ENCODE measurements at regions of chr10 and their contacts with region 1.

Region 1: DNA sequence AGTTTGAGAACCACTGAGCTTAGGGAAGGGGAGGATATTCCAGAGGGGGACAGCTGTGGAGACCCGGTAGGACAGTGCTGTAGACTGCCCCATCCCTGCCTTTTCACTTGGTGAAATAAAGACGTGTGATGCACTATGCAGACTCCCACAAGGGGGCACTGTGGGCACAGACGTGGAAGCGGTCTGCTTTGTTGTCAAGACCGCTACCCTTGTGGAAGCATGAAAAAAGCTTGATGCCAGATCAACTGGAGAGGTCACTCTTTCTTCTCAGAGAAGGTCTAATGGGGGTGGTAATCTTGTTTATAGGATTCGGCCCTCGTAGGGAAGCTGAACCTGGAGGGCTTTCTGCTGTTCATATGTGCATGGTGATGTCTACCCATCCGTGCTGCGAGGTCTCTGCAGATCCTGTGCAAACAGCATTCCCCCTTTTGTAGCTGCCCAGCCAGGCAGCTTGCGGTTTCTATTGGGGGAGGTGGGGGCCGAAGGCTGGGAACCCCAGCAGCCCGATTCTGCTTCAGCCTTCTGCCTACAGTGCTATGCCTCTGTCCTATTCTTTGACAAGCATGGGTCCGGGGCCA is 13.7 kb downstream of the RPS24 start:
- DNase-seq: peak; percentile 70 to 86
- ATAC-seq: peak; percentile 71 to 81
- H3K4me3 ChIP-seq: no peak overlapping the region
- H3K27ac ChIP-seq: peak overlapping the region in 1 of 2 experiments; percentile 57; a peak in 3 of 6 replicates
- H3K4me1 ChIP-seq: no peaks in the 10 kb centered on the region; the same call in 2 of the 3 replicates
- CTCF ChIP-seq: peak; percentile 95
- EP300 ChIP-seq: no peak
- POLR2A ChIP-seq: no peak
- RAD21 ChIP-seq: peak; percentile 96

Region 2: GRCh38 chr10:77983384-77984341 is 63.7 kb before region 1 on chr10:
- CTCF ChIA-PET with region 1: no interaction called
- POLR2A ChIA-PET with region 1: no interaction called
- DNase-seq: no peak
- ATAC-seq: no peak
- H3K4me3 ChIP-seq: no peak overlapping the region
- H3K27ac ChIP-seq: no peak overlapping the region
- H3K4me1 ChIP-seq: no peaks in the 10 kb centered on the region
- CTCF ChIP-seq: no peak
- EP300 ChIP-seq: no peak
- POLR2A ChIP-seq: no peak
- RAD21 ChIP-seq: no peak

Region 3: GRCh38 chr10:78062296-78062695 is 14.9 kb after region 1 on chr10:
- CTCF ChIA-PET with region 1: interaction called, 33 read pairs
- POLR2A ChIA-PET with region 1: no interaction called
- DNase-seq: no peak
- ATAC-seq: no peak
- H3K4me3 ChIP-seq: no peak overlapping the region
- H3K27ac ChIP-seq: no peak overlapping the region
- H3K4me1 ChIP-seq: peaks cover 11% of the 10 kb centered on the region; the same call in 1 of the 3 replicates
- CTCF ChIP-seq: no peak
- EP300 ChIP-seq: no peak
- POLR2A ChIP-seq: no peak
- RAD21 ChIP-seq: no peak

Region 4: DNA sequence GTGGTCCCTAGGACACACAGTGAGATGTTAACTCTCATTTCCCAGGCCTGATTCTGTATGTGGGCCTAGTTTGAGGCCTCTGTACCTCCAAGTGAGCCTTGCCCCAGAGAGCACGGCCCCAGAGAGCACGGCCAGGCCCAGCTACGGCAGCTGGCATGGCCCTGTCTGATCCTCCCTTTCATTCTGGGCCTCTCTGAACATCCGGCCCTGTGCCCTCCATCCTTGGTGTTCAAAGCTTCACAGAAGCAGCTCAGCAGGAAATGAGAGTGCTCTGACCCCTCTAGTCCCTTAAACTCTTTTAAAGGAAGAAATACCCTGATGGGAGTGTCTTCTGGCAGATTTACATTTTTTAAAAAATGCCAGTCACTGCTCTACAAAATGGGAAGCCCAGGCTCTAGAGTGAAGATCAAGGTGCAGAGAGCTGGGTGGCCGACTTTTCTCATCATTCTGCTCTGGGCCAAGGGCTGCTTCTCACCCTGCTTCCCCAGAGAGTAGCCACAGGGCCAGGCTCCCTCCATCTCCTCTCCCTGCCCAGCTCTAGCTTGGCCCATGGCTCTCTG is 158.1 kb after region 1 on chr10:
- CTCF ChIA-PET with region 1: interaction called, 10 read pairs
- POLR2A ChIA-PET with region 1: no interaction called
- DNase-seq: no peak
- ATAC-seq: no peak
- H3K4me3 ChIP-seq: no peak overlapping the region
- H3K27ac ChIP-seq: 0 out of 6 replicates have a peak overlapping the region, but pooled peaks of 1 of the 2 experiments have one; percentile 14
- H3K4me1 ChIP-seq: no peaks in the 10 kb centered on the region
- CTCF ChIP-seq: no peak
- EP300 ChIP-seq: no peak
- POLR2A ChIP-seq: no peak
- RAD21 ChIP-seq: no peak

Region 5: DNA sequence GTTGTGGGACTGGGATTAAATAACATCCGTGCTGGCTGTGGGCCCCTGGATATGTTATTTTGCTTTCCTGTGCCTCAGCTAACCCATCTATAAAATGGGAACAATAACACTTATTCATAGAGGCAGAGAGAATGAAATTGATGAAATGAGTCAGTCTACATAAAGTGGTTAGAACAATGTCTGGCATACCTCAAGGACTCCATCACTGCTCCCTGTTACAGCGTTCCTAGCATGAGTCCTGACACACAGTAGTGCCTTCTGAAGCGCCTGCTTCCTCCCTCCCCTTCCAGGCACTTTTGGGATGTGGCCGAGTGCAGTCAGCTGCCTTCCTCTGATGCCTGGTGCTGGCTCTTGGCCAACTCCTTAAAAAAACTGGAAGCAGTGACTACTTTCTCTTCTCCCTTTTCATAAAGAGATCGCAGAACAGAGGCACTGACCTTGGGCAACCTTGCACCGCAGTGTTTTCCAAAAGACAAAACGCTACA is 913.0 kb after region 1 on chr10:
- CTCF ChIA-PET with region 1: interaction called, 12 read pairs
- POLR2A ChIA-PET with region 1: no interaction called
- DNase-seq: no peak
- ATAC-seq: no peak
- H3K4me3 ChIP-seq: no peak overlapping the region
- H3K27ac ChIP-seq: peak overlapping the region in 1 of 2 experiments; percentile 35; a peak in 2 of 6 replicates
- H3K4me1 ChIP-seq: peaks cover 26% of the 10 kb centered on the region
- CTCF ChIP-seq: no peak
- EP300 ChIP-seq: no peak
- POLR2A ChIP-seq: no peak
- RAD21 ChIP-seq: no peak

Region 6: GRCh38 chr10:79202188-79203013 is 1155.0 kb after region 1 on chr10:
- CTCF ChIA-PET with region 1: interaction called, 97 read pairs
- POLR2A ChIA-PET with region 1: no interaction called
- DNase-seq: peak; percentile 41 to 57
- ATAC-seq: peak; percentile 57 to 82; a peak in 5 of 6 replicates
- H3K4me3 ChIP-seq: no peak overlapping the region
- H3K27ac ChIP-seq: no peak overlapping the region
- H3K4me1 ChIP-seq: peaks cover 11% of the 10 kb centered on the region
- CTCF ChIP-seq: peak; percentile 61
- EP300 ChIP-seq: no peak
- POLR2A ChIP-seq: no peak
- RAD21 ChIP-seq: peak; percentile 59 to 64